ENCODE measurements at regions of chr15 and their contacts with region 1.

Region 1: GRCh38 chr15:90886041-90886614 is 1.8 kb downstream of the FES start:
- DNase-seq: peak; percentile 80
- CTCF ChIP-seq: peak; percentile 90

Region 2: DNA sequence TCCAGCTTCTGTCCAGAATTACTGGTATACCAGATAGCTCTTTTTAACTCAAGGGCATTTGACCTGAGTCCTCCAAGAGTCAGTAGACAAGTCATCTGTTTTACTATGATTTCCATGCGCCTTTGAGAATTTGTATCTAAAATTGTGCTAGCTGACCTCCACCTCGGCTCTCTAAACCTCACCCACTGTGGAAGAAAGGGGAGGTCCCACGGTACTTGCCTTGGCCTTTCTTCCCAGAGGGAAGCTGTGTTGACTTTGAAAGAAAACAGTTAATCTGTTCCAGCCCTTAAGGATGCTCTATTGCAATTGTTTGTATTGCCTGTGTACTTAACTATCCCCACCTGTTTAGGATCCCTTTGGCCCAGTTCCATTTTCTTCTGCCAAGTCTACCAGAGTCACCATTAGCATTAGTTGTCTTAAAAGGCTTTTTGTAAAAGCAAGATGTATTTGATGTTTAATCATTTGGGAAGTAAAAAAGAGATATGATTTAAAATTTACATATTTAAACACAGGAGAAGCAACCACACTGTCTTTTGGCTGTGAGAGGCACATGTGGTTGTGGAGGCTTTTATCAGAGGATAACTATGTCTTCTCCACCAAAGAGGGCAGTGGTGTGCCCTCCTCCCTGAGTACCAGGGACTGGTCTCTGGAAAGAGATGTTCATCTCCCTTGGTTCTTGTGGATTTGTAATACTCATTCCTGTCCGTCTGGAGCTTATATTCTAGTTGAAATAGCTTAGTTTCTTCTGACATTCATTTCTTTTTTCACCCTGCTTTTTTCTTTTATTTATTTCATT is 267.6 kb before region 1 on chr15:
- CTCF ChIA-PET with region 1: interaction called, 17 read pairs
- POLR2A ChIA-PET with region 1: no interaction called
- DNase-seq: no peak
- CTCF ChIP-seq: no peak

Region 3: DNA sequence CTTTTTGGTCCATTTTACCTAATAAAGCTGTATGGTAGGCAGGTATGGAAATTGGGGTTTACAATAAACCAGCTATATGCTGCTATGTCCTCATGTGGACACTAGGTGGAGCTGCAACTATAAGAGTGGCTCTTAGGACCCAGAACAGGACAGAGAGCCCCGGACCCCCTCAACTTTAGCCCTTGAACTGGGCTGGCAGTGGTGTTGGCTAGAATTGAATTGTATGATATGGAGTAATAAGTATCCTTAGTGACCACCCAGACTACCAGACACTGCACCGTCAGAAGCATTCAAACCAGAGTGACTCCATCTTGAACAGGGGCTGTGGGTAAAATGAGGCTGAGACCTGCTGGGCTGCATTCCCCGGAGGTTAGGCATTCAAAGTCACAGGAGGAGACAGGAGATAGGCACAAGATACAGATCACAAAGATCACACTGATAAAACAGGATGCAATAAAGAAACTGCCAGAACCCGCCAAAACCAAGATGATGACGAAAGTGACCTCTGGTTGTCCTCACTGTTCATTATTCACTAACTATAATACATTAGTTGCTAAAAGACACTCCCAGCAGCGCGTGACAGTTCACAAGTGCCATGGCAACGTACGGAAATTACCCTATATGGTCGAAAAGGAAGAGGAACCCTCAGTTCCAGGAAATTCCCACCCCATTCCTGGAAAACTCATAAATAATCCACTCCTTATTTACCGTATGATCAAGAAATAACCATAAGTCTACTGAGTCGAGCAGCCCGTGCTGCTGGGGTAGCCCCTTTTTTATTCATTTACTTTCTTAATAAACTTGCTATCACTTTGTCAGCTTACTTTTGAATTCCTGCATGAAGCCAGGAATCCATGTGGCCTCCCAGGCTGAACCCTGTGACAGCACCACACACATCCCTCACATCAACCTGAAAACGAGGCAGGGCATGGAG is 237.7 kb before region 1 on chr15:
- CTCF ChIA-PET with region 1: interaction called, 45 read pairs
- POLR2A ChIA-PET with region 1: no interaction called
- DNase-seq: peak; percentile 75
- CTCF ChIP-seq: peak; percentile 79

Region 4: DNA sequence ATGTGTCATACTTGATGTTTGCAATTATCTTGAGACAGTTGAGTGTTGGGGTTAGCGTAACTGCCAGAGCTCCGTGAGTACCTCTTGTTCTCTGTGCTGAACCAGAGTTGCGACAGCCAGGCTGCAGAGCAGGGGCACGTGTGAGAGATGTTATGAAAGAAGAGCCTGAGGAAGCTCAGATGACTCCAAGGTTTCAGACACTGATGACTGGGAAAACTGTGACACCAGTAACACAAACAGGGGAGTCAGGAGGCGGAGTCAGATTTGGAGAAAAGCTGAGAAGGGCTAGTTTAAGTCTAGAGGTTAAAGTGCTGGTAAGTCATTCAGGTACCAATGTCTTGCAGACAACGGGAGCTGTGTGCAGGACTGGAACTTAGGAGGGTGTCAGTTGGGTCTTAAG is 124.0 kb before region 1 on chr15:
- CTCF ChIA-PET with region 1: interaction called, 11 read pairs
- POLR2A ChIA-PET with region 1: no interaction called
- DNase-seq: no peak
- CTCF ChIP-seq: no peak

Region 5: DNA sequence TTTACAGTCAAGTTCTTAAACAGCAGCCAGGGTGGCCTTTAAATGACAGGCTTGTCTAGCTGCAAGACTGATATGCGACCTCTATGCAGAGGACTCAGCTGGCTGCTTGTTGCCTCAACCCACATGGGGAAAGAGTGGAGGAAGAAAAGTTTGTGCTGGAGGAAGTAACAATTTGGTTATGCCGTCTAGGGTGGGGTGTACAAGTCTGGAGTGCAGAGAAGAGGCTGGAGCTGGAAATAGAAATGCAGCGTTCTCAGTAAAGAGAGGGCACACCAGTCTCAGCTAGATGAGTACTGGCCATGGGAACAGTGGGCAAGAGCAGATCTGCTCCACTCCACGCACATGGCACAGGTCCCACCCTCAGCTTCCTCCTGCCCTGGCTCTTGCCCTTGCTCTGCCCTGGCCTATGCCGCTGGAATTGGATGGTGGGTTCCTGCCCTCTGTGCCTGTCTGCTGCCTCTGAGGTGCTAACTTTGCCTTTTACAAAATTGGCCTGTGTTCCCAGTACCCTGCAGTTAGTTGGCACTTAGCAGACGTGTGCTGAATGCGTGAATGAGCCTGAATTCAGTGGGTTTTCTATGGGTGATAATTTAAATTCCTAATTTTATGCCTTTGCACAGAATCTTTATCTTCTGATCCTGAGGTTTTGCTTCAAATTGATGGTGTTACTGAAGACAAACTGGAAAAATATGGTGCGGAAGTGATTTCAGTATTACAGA is 77.5 kb before region 1 on chr15:
- CTCF ChIA-PET with region 1: interaction called, 14 read pairs
- POLR2A ChIA-PET with region 1: no interaction called
- DNase-seq: no peak
- CTCF ChIP-seq: no peak

Region 6: GRCh38 chr15:90902040-90902839 is 16.1 kb after region 1 on chr15:
- CTCF ChIA-PET with region 1: interaction called, 73 read pairs
- POLR2A ChIA-PET with region 1: no interaction called
- DNase-seq: peak; percentile 92
- CTCF ChIP-seq: peak; percentile 86

Region 7: GRCh38 chr15:90982135-90982534 is 96.0 kb after region 1 on chr15:
- CTCF ChIA-PET with region 1: no interaction called
- POLR2A ChIA-PET with region 1: no interaction called
- DNase-seq: no peak
- CTCF ChIP-seq: no peak